Kidney (tissue), 22 donors: ENCODE measurements at regions of chr16 and their contacts with region 1.

Region 1: DNA sequence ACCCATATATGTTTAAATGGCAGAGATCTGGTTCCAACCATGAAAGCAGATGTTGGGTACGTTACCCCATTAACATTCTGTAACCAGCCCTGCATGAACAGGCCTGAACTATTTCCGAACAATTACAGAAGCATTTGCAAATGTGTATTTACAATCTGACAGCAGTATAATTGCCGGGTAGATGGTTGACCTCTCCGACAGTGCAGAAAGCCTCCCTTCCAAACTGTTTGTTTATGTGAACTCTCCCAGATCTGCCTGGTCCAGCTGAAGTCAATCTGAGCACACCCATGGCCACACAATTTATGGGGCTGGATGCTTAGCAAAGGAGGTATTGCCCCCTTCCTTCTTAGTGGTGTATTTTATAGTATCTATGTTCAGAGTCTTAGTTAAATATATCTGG is 21.8 kb downstream of the NUDT7 start:
- DNase-seq: peak in 3 of 5 donors; percentile 33 to 52 (median 43)
- H3K4me3 ChIP-seq: no peak overlapping the region
- H3K27ac ChIP-seq: no peak overlapping the region
- H3K4me1 ChIP-seq: no peaks in the 10 kb centered on the region
- H3K27me3 ChIP-seq: no peaks in the 10 kb centered on the region
- CTCF ChIP-seq: no peak

Region 2: GRCh38 chr16:77564791-77565390 is 179.2 kb before region 1 on chr16:
- intact Hi-C with region 1: no loop called
- DNase-seq: no peak
- H3K4me3 ChIP-seq: no peak overlapping the region
- H3K27ac ChIP-seq: no peak overlapping the region
- H3K4me1 ChIP-seq: no peaks in the 10 kb centered on the region
- H3K27me3 ChIP-seq: no peaks in the 10 kb centered on the region
- CTCF ChIP-seq: no peak

Region 3: DNA sequence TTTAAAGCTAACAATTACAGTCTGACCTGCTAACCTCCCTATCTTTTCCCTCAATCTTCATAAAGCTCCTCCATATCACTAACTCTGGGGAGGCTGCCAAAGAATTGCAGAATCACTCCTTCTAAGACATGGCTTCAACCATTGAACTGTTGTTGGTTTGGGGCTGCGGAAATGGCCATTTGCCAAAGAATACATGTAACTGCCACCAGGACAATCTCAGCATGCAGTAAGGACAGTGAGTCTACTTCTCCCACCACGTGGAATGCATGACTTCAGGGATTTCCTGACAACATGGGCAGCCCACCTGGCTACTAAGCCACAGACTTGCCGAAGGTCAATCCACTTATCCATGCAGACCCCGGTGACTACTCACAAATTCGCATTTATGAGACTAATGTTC is 126.2 kb before region 1 on chr16:
- intact Hi-C with region 1: no loop called
- DNase-seq: peak in 3 of 5 donors; percentile 21 to 50 (median 26)
- H3K4me3 ChIP-seq: no peak overlapping the region
- H3K27ac ChIP-seq: no peak overlapping the region
- H3K4me1 ChIP-seq: no peaks in the 10 kb centered on the region
- H3K27me3 ChIP-seq: no peaks in the 10 kb centered on the region
- CTCF ChIP-seq: no peak

Region 4: GRCh38 chr16:77789085-77790008 is 45.2 kb after region 1 on chr16:
- intact Hi-C with region 1: loop called (anchors 5 kb)
- DNase-seq: peak in 4 of 5 donors; percentile 17 to 40 (median 32)
- H3K4me3 ChIP-seq: no peak overlapping the region
- H3K27ac ChIP-seq: no peak overlapping the region
- H3K4me1 ChIP-seq: peaks cover 0 to 3% (median 0%) of the 10 kb centered on the region in 3 donors
- H3K27me3 ChIP-seq: peaks cover 16% of the 10 kb centered on the region
- CTCF ChIP-seq: no peak